T-cell (primary cell): ENCODE measurements at regions of chr7 and their contacts with region 1.

Region 1: DNA sequence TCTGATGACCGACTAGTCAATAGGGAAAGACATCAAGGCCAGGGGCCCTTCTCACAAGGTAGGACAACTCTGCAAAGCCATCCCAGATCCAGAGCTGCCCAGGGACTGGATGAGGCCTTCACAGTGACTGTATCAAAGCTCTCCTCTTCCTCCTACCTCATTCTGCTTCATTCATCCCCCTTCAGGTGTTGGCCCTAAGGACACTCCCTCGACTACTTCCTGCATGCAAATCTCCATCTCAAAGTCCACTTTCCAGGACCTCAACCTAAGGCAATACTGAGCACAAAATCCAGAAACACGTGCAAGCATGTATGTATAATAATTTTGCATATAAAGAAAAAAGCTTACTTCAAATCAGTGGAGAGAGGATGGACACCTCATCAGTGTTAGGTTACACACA is 25.1 kb downstream of the DPY19L1 start:
- DNase-seq: no peak
- ATAC-seq: no peak
- H3K4me3 ChIP-seq: no peak overlapping the region
- H3K4me3 Mint-ChIP-seq: no peak overlapping the region
- H3K27ac ChIP-seq: no peak overlapping the region
- H3K27ac Mint-ChIP-seq: no peak overlapping the region
- H3K4me1 ChIP-seq: no peaks in the 10 kb centered on the region
- H3K4me1 Mint-ChIP-seq: no peaks in the 10 kb centered on the region
- H3K27me3 ChIP-seq: no peaks in the 10 kb centered on the region
- H3K27me3 Mint-ChIP-seq: no peaks in the 10 kb centered on the region

Region 2: DNA sequence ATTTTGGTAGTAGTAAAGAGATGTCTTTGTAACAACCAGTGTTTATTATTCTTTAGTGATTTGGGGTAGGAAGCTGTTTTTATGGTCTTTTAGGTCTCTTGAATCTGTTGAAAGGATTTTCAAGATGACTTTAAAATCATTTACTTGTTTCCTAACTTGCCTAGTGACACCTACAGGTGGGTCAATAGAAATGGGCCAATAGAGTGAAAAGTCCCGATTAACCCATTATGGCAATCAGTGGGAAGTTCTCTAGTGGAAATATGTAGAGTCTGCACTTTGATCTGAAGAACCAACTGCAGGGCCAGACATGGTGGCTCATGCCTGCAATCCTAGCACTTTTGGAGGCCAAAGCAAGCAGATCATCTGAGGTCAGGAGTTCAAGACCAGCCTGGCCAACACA is 1481.5 kb before region 1 on chr7:
- CTCF ChIA-PET with region 1: no interaction called
- POLR2A ChIA-PET with region 1: no interaction called
- DNase-seq: no peak
- ATAC-seq: no peak
- H3K4me3 ChIP-seq: no peak overlapping the region
- H3K4me3 Mint-ChIP-seq: no peak overlapping the region
- H3K27ac ChIP-seq: no peak overlapping the region
- H3K27ac Mint-ChIP-seq: no peak overlapping the region
- H3K4me1 ChIP-seq: no peaks in the 10 kb centered on the region
- H3K4me1 Mint-ChIP-seq: no peaks in the 10 kb centered on the region
- H3K27me3 ChIP-seq: no peaks in the 10 kb centered on the region
- H3K27me3 Mint-ChIP-seq: no peaks in the 10 kb centered on the region

Region 3: GRCh38 chr7:34982371-34983019 is 29.7 kb before region 1 on chr7:
- CTCF ChIA-PET with region 1: no interaction called
- POLR2A ChIA-PET with region 1: no interaction called
- DNase-seq: no peak
- ATAC-seq: no peak
- H3K4me3 ChIP-seq: no peak overlapping the region
- H3K4me3 Mint-ChIP-seq: no peak overlapping the region
- H3K27ac ChIP-seq: no peak overlapping the region
- H3K27ac Mint-ChIP-seq: no peak overlapping the region
- H3K4me1 ChIP-seq: no peaks in the 10 kb centered on the region
- H3K4me1 Mint-ChIP-seq: peaks cover 0 to 3% (median 0%) of the 10 kb centered on the region in 3 donors
- H3K27me3 ChIP-seq: no peaks in the 10 kb centered on the region
- H3K27me3 Mint-ChIP-seq: no peaks in the 10 kb centered on the region

Region 4: GRCh38 chr7:35035511-35035961 is 23.4 kb after region 1 on chr7:
- CTCF ChIA-PET with region 1: interaction called in 1 of 2 experiments, 11 read pairs
- POLR2A ChIA-PET with region 1: no interaction called
- DNase-seq: peak in 22 of 35 experiments; percentile 3 to 57 (median 16)
- ATAC-seq: peak in 1 of 4 experiments; percentile 25
- H3K4me3 ChIP-seq: no peak overlapping the region
- H3K4me3 Mint-ChIP-seq: peak overlapping the region; percentile 91 to 98 (median 93)
- H3K27ac ChIP-seq: peak overlapping the region; percentile 46
- H3K27ac Mint-ChIP-seq: peak overlapping the region; percentile 70 to 84
- H3K4me1 ChIP-seq: peaks cover 2 to 24% of the 10 kb centered on the region in 2 experiments
- H3K4me1 Mint-ChIP-seq: peaks cover 34 to 38% (median 35%) of the 10 kb centered on the region in 3 donors
- H3K27me3 ChIP-seq: peaks cover 2% of the 10 kb centered on the region in 2 experiments
- H3K27me3 Mint-ChIP-seq: no peaks in the 10 kb centered on the region